ENCODE measurements at regions of chr2 and their contacts with region 1.

Region 1: DNA sequence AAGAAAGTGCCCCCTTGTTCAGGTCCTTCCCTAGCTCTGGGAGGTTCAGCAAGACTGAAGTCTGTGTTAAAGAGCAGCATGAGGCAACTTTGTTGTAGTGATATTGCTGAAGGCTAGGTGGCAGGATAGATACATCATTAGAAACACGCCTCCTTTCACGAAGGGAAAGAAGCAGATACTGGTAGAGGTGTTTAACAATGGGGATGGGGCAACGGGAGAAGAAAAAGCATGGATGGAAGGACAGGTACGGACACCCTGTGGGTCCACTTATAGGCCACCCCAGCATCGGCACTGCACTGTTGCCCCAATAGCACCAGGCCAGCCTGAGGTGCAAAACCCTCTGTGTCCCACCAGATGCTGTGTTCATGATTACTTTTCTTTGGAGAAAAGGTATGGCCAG is 3.5 kb upstream of the IGFBP5 start:
- DNase-seq: no peak
- H3K4me3 ChIP-seq: no peak overlapping the region
- H3K27me3 ChIP-seq: no peaks in the 10 kb centered on the region
- CTCF ChIP-seq: peak; percentile 78

Region 2: GRCh38 chr2:216680951-216681629 is 17.8 kb before region 1 on chr2:
- CTCF ChIA-PET with region 1: interaction called, 11 read pairs
- POLR2A ChIA-PET with region 1: no interaction called
- DNase-seq: no peak
- H3K4me3 ChIP-seq: no peak overlapping the region
- H3K27me3 ChIP-seq: no peaks in the 10 kb centered on the region
- CTCF ChIP-seq: no peak

Region 3: GRCh38 chr2:217105733-217106649 is 407.1 kb after region 1 on chr2:
- CTCF ChIA-PET with region 1: interaction called, 13 read pairs
- POLR2A ChIA-PET with region 1: interaction called, 13 read pairs
- DNase-seq: peak; percentile 91
- H3K4me3 ChIP-seq: no peak overlapping the region
- H3K27me3 ChIP-seq: no peaks in the 10 kb centered on the region
- CTCF ChIP-seq: no peak

Region 4: DNA sequence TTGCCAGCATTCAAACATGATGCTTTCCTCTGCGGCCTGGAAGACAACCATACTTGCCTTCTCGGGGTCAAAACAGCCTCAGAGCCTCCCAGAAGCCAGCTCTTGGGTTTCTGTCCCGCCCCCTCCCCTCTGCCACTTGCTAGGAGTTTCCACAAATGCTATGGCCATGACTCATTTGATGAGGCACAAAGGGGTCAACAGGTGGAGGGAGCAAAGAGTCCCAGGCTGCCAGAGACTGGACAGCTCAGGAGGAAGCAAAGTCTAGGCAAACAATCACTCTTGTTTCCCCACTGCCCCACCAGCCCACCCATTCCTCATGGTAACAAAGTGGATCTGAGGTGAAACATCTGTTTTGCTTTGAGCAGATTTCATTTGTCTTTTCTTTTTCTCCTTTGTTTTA is 752.8 kb after region 1 on chr2:
- CTCF ChIA-PET with region 1: no interaction called
- POLR2A ChIA-PET with region 1: no interaction called
- DNase-seq: no peak
- H3K4me3 ChIP-seq: no peak overlapping the region
- H3K27me3 ChIP-seq: no peaks in the 10 kb centered on the region
- CTCF ChIP-seq: no peak

Region 5: GRCh38 chr2:217510771-217511291 is 811.9 kb after region 1 on chr2:
- CTCF ChIA-PET with region 1: interaction called, 47 read pairs
- POLR2A ChIA-PET with region 1: interaction called, 10 read pairs
- DNase-seq: peak; percentile 38
- H3K4me3 ChIP-seq: no peak overlapping the region
- H3K27me3 ChIP-seq: no peaks in the 10 kb centered on the region
- CTCF ChIP-seq: peak; percentile 80

Region 6: DNA sequence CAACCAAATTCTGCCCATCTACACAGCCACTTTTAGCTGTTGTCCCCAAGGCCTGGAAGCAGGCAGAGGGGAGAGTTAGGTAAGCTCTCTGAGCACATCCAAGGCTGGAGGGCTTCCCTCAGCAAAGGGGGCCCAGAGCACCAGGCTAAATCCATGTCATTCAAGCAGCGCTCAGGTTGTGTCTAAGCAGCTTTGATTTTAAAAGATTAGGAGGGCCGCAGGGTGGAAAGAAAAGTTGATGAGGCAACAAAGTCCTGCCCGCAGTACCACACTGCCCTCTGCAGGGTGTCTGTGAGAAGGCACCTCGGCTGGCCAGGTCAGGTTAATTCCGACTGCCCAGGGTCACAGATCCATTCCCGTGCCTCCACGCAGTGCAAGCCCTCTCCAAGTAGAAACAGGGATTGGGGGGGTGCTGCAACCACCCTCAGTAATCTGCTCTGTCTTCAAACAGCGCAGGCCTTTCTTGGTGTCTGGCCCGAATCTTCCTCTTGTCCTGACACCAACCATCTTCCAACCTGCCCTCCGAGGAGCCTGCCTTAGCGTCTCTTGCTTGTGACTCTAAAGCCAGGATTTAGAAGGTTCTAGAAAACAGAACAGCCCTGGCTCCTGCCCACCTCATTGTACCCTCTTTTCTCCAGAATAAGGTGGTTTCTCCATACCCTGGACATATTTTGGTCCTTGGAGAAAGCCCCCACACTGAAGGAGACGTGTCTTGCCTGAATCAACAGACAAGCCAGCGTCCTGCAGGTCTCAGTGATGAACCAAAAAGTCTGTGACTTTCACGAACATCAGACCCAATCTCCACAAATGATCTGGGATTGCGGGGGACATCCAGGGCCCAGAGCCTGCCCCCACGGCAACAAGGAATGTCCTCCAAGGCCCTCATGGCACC is 1014.7 kb after region 1 on chr2:
- CTCF ChIA-PET with region 1: interaction called, 14 read pairs
- POLR2A ChIA-PET with region 1: no interaction called
- DNase-seq: no peak
- H3K4me3 ChIP-seq: no peak overlapping the region
- H3K27me3 ChIP-seq: no peaks in the 10 kb centered on the region
- CTCF ChIP-seq: peak; percentile 98